ENCODE measurements at regions of chr20 and their contacts with region 1.

Region 1: GRCh38 chr20:31822421-31823330 is 3.5 kb downstream of the MYLK2 start:
- DNase-seq: peak; percentile 46
- ATAC-seq: peak; percentile 98
- H3K4me3 ChIP-seq: no peak overlapping the region
- H3K27ac ChIP-seq: no peak overlapping the region
- H3K4me1 ChIP-seq: no peaks in the 10 kb centered on the region
- H3K27me3 ChIP-seq: no peaks in the 10 kb centered on the region
- CTCF ChIP-seq: peak; percentile 95
- POLR2A ChIP-seq: no peak
- RAD21 ChIP-seq: peak; percentile 94

Region 2: GRCh38 chr20:31835977-31836852 is 13.5 kb after region 1 on chr20:
- CTCF ChIA-PET with region 1: interaction called, 12 read pairs
- POLR2A ChIA-PET with region 1: no interaction called
- dilution Hi-C with region 1: no loop called
- in situ Hi-C with region 1: no loop called
- intact Hi-C with region 1: no loop called
- DNase-seq: peak; percentile 92
- ATAC-seq: peak; percentile 88
- H3K4me3 ChIP-seq: no peak overlapping the region
- H3K27ac ChIP-seq: no peak overlapping the region
- H3K4me1 ChIP-seq: peaks cover 15% of the 10 kb centered on the region
- H3K27me3 ChIP-seq: peaks cover 3% of the 10 kb centered on the region; the same call in 1 of the 2 replicates
- CTCF ChIP-seq: no peak
- POLR2A ChIP-seq: no peak
- RAD21 ChIP-seq: no peak

Region 3: DNA sequence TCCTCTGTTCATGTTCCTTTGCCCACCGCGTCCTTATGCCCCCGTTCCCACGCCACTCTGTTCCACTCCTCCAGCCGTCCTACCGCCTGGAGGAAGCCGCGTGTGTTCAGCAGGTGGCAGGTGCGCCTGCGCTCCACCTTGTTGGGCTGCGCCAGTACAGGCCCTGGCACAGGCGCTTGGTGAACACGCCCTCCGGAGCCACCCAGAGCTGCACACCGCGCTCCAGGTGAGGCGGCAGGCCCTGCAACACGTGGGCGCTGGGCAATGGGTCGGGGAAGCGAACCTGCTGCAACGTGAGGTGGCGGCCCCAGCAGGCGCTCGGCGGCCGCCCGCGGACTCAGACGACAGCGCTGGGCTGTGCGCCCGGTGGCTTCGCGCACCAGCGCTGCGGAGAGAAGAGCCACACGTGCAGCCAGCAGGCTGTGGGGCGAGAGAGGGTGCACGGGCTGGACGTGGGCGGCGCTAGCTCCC is 26.8 kb after region 1 on chr20:
- CTCF ChIA-PET with region 1: interaction called, 7 read pairs
- POLR2A ChIA-PET with region 1: no interaction called
- dilution Hi-C with region 1: no loop called
- in situ Hi-C with region 1: no loop called
- intact Hi-C with region 1: loop called (anchors 2 kb)
- DNase-seq: no peak
- ATAC-seq: no peak
- H3K4me3 ChIP-seq: no peak overlapping the region
- H3K27ac ChIP-seq: no peak overlapping the region
- H3K4me1 ChIP-seq: no peaks in the 10 kb centered on the region
- H3K27me3 ChIP-seq: peaks cover 60% of the 10 kb centered on the region
- CTCF ChIP-seq: no peak
- POLR2A ChIP-seq: no peak
- RAD21 ChIP-seq: no peak

Region 4: GRCh38 chr20:31908016-31908415 is 85.3 kb after region 1 on chr20:
- CTCF ChIA-PET with region 1: no interaction called
- POLR2A ChIA-PET with region 1: no interaction called
- dilution Hi-C with region 1: no loop called
- in situ Hi-C with region 1: no loop called
- intact Hi-C with region 1: no loop called
- DNase-seq: no peak
- ATAC-seq: no peak
- H3K4me3 ChIP-seq: no peak overlapping the region
- H3K27ac ChIP-seq: no peak overlapping the region
- H3K4me1 ChIP-seq: no peaks in the 10 kb centered on the region
- H3K27me3 ChIP-seq: peaks cover 21% of the 10 kb centered on the region
- CTCF ChIP-seq: no peak
- POLR2A ChIP-seq: no peak
- RAD21 ChIP-seq: no peak

Region 5: DNA sequence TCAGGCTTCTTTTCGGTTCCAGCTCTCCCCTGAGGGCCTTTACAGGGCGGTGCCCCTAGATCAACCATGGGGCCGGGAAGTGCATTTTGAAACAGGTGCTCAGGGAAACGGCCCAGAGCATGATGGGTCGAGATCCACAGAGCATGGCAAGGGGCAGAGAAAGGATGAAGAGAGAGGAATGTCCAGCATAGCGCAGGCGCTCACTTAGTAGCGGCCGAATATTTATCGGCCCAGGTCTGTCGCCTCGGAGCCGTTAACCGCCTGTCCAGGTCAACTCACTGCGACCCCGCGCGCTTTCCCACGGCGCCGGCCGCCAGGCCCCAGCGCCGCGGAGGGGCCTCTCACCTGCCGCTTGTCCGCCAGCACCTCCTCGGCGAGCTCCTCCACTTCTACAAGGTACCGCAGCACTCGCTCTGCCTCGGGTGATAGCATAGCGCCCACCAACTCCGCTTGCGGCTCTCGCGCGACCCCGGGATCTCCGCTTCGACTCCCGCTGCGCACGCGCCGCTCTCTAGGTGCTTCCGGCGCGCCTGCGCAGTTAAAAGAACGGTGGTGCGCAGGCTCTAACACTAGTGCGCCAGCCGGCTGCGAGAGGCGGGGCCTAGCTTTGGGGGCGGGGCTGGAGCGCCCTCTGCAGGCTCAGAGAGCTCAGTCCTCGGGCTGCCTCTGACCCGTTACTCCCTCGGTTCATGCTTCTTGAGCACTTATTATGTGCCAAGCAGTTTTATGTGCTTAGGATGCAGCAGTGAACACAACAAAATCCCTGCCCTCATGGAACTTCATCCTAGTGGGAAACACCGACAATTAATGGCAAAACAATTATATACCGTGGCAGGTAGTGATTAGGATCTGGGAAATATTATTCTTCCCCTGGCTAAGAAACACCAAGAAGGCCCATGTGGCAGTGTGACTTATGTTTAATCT is 129.1 kb after region 1 on chr20 and contains the start of gene PDRG1:
- CTCF ChIA-PET with region 1: interaction called, 3 read pairs
- POLR2A ChIA-PET with region 1: no interaction called
- dilution Hi-C with region 1: no loop called
- in situ Hi-C with region 1: loop called (anchors 10 kb)
- intact Hi-C with region 1: loop called (anchors 1 kb)
- DNase-seq: peak; percentile 93
- ATAC-seq: peak; percentile 100
- H3K4me3 ChIP-seq: peak within 1 kb of the TSS; percentile 83
- H3K27ac ChIP-seq: peak within 1 kb of the TSS; percentile 66
- H3K4me1 ChIP-seq: peaks cover 6% of the 10 kb centered on the region
- H3K27me3 ChIP-seq: peaks cover 10% of the 10 kb centered on the region
- CTCF ChIP-seq: peak; percentile 98
- POLR2A ChIP-seq: peak; percentile 87
- RAD21 ChIP-seq: peak; percentile 67
- total RNA-seq, gene PDRG1: 5.0 and 5.8 TPM in 2 replicates

Region 6: DNA sequence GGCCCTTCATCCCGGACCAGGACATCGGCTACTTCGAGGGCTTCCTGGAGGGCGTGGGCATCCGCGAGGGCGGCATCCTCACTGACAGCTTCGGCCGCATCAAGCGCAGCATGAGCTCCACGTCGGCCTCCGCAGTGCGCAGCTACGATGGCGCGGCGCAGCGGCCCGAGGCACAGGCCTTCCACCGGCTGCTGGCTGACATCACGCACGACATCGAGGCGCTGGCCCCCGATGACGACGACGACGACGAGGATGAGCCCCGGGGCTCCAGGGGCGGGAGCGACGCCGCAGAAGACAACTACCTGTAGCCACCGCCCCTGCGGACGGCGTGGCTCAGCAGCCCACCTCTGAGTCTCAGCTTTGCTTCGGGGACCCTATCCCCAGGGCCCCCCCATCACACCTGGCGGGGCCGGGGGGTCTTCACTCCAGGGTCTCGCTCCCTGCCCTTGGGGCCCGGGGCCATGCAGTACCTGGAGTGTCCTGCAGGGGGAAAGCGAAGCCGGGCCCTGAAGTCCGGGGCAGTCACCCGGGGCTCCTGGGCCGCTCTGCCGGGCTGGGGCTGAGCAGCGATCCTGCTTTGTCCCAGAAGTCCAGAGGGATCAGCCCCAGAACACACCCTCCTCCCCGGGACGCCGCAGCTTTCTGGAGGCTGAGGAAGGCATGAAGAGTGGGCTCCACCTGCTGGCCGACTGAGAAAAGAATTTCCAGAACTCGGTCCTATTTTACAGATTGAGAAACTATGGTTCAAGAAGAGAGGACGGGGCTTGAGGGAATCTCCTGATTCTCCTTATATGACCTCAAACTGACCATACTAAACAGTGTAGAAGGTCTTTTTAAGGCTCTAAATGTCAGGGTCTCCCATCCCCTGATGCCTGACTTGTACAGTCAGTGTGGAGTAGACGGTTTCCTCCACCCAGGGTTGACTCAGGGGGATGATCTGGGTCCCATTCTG is 208.6 kb after region 1 on chr20:
- CTCF ChIA-PET with region 1: interaction called, 5 read pairs
- POLR2A ChIA-PET with region 1: no interaction called
- dilution Hi-C with region 1: no loop called
- in situ Hi-C with region 1: loop called (anchors 5 kb)
- intact Hi-C with region 1: loop called (anchors 1 kb)
- DNase-seq: peak; percentile 73
- ATAC-seq: peak; percentile 98
- H3K4me3 ChIP-seq: no peak overlapping the region
- H3K27ac ChIP-seq: no peak overlapping the region
- H3K4me1 ChIP-seq: no peaks in the 10 kb centered on the region
- H3K27me3 ChIP-seq: peaks cover 75% of the 10 kb centered on the region
- CTCF ChIP-seq: peak; percentile 73
- POLR2A ChIP-seq: no peak
- RAD21 ChIP-seq: peak; percentile 71

Region 7: DNA sequence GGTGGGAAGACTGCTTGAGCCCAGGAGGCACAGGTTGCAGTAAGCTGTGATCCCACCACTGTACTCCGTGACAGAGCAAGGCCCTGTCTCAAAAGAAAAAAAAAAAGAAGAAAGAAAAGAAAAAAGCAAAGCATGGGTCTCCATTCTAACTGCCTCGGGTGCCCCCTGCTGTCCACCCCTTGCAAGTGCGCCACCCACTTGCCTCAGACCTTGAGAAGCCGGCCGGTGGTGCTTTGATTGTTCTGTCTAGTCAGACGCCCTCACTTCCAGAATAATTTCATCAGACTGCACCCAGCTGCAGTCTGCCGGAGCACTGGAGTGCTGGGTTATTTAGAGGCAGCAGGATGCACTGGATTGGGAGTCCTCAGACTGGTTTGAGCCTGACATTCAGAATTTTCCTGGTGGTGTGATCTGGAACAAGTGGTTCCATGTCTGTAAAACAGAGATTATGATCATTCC is 269.2 kb after region 1 on chr20:
- CTCF ChIA-PET with region 1: no interaction called
- POLR2A ChIA-PET with region 1: no interaction called
- dilution Hi-C with region 1: no loop called
- in situ Hi-C with region 1: no loop called
- intact Hi-C with region 1: loop called (anchors 1 kb)
- DNase-seq: peak; percentile 72
- ATAC-seq: peak; percentile 99
- H3K4me3 ChIP-seq: no peak overlapping the region
- H3K27ac ChIP-seq: no peak overlapping the region
- H3K4me1 ChIP-seq: no peaks in the 10 kb centered on the region; the same call in 1 of the 2 replicates
- H3K27me3 ChIP-seq: peaks cover 43% of the 10 kb centered on the region
- CTCF ChIP-seq: peak; percentile 94
- POLR2A ChIP-seq: no peak
- RAD21 ChIP-seq: peak; percentile 91

Region 8: DNA sequence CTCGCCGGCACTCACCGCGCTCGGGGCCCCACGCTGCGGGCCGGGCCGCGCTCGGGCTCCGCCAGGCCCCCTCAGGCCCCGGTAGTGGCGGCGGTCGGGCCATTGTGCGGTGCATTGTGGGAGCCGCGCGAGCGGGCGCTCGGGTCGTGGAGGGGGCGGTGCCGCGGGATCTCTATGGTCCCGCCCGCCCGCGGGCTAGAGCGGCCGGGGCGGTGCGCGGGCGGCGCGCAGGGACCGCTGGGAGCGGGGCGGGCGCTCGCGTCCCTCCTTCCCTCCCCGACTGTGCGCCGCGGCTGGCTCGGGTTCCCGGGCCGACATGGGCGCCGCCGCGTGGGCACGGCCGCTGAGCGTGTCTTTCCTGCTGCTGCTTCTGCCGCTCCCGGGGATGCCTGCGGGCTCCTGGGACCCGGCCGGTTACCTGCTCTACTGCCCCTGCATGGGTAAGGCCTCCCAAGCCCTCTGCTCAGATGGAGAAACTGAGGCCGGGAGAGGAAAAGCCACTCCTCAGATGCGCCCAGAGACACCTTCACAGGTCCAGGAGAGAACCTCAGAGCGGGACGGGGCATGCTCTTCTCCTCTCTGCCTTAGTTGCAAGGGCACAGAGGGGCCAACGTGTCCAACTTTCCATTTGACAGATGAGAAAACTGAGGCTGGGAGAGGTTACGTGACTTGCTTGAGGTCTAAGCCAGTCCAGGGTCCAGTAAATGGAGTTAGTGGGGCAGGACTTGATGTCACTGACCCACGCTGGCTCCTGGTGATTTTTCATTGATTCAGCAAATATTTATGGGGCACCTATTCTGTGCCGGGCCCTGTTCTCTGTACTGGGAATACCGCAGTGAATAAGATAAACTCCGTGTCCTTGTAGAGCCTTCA is 385.2 kb after region 1 on chr20 and contains the starts of genes PLAGL2 and POFUT1:
- CTCF ChIA-PET with region 1: no interaction called
- POLR2A ChIA-PET with region 1: no interaction called
- dilution Hi-C with region 1: no loop called
- in situ Hi-C with region 1: no loop called
- intact Hi-C with region 1: loop called (anchors 5 kb)
- DNase-seq: peak; percentile 82
- ATAC-seq: peak; percentile 98
- H3K4me3 ChIP-seq: peak within 1 kb of the TSS; percentile 93
- H3K27ac ChIP-seq: peak within 1 kb of the TSS; percentile 86
- H3K4me1 ChIP-seq: peaks cover 15% of the 10 kb centered on the region
- H3K27me3 ChIP-seq: no peaks in the 10 kb centered on the region
- CTCF ChIP-seq: 0 out of 2 replicates have a peak, but pooled peaks have one; percentile 31
- POLR2A ChIP-seq: peak; percentile 80
- RAD21 ChIP-seq: no peak; the same call in 1 of the 2 replicates
- total RNA-seq, gene PLAGL2: 2.9 and 3.1 TPM in 2 replicates
- total RNA-seq, gene POFUT1: 23.1 and 25.5 TPM in 2 replicates

Measured in IMR-90 (cell line).